ENCODE measurements at regions of chr14 and their contacts with region 1.

Region 1: GRCh38 chr14:58107947-58108552 is 44.0 kb downstream of the ARMH4 start:
- DNase-seq: peak in 1 of 2 donors; percentile 41
- ATAC-seq: peak; percentile 51

Region 2: GRCh38 chr14:57302883-57303282 is 805.2 kb before region 1 on chr14:
- intact Hi-C with region 1: no loop called
- DNase-seq: no peak
- ATAC-seq: no peak

Region 3: GRCh38 chr14:57692671-57693070 is 415.4 kb before region 1 on chr14:
- intact Hi-C with region 1: no loop called
- DNase-seq: no peak
- ATAC-seq: peak; percentile 52

Region 4: DNA sequence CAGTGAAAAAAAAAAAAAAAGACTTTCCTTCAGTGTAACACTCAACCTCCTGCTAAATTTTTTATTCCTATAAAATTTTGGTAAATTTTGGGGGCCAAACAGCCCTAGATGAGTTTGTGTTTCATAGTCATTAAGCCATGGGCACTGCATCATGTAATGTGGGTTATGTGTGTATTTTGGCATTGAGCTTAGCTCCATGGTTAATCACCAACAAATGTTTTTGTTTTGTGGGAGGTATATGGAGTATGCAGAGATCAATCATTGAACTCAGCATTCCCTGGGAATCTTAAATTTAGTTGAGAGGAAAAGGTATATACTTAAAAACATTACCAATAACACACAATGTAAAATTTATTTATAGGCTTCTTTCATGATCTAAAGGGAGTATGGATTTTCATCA is 52.5 kb after region 1 on chr14:
- intact Hi-C with region 1: loop called in 1 of 2 experiments (anchors 5 kb)
- DNase-seq: no peak
- ATAC-seq: no peak

Region 5: DNA sequence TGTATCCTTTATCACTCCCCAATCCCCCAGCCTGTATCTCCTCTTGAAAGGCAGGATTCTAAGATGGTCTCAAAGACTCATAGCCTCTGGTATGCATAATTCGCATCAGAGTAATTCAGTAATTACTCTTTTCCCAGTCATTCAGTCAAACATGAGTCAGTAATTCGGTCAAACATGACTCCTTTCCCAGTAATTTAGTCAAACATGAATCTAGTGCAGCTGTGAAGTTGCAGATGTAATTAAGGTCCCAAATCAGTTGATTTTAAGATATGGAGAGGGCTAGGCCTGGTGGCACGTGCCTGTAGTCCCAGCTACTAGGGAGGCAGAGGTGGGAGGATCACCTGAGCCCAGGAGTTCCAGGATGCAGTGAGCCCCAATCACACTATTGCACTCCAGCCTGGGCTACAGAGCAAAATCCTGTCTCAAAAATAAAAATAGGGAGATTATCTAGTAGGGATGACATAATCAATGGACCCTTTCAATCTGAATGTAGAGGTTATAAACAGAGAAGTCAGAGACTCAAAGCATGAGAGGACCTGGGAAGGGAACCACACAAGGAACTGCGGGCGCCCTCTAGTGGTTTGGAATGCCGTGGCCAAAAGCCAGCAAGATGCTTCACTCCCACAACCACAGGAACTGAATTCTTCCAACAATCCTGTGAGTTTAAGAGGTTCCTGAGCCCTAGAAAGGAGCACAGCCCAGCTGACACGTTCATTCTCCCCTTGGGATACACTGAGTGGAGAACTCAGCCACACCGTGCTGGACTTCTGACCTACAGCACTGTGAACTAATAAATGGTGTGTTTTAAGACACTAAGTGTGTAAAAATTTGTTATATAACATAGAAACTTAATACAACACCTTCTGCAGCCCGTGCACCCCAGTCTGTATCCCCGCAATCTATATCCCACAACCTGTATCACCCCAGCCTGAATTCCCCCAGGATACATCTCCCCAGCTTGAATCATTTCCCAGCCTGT is 58.2 kb after region 1 on chr14:
- intact Hi-C with region 1: loop called (anchors 2 to 5 kb)
- DNase-seq: peak; percentile 63 to 91
- ATAC-seq: peak; percentile 77

Region 6: DNA sequence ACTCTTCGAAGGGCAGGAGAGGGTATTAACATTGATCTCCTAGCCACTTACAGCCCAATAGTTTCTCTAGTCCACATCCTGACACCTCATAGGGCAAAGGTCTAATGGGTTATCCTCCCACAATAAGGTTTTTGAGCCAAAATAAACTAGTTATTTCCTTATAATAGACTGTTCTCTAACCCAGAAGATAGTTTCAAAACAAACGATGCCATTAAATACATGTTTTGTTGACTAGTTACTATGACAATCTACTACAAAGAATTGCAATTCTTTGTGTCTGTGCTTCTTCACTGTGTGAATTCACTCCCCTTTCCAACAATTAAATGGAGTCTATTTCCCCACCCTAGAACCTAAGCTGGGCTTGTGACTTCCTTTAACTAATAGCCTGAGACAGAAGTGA is 85.5 kb after region 1 on chr14:
- intact Hi-C with region 1: no loop called
- DNase-seq: no peak
- ATAC-seq: peak; percentile 75

Region 7: GRCh38 chr14:60008042-60008441 is 1900.0 kb after region 1 on chr14:
- intact Hi-C with region 1: no loop called
- DNase-seq: no peak
- ATAC-seq: no peak

Measured in left colon (tissue), 2 donors.